Motor neuron (in vitro differentiated cells): ENCODE measurements at regions of chr22 and their contacts with region 1.

Region 1: DNA sequence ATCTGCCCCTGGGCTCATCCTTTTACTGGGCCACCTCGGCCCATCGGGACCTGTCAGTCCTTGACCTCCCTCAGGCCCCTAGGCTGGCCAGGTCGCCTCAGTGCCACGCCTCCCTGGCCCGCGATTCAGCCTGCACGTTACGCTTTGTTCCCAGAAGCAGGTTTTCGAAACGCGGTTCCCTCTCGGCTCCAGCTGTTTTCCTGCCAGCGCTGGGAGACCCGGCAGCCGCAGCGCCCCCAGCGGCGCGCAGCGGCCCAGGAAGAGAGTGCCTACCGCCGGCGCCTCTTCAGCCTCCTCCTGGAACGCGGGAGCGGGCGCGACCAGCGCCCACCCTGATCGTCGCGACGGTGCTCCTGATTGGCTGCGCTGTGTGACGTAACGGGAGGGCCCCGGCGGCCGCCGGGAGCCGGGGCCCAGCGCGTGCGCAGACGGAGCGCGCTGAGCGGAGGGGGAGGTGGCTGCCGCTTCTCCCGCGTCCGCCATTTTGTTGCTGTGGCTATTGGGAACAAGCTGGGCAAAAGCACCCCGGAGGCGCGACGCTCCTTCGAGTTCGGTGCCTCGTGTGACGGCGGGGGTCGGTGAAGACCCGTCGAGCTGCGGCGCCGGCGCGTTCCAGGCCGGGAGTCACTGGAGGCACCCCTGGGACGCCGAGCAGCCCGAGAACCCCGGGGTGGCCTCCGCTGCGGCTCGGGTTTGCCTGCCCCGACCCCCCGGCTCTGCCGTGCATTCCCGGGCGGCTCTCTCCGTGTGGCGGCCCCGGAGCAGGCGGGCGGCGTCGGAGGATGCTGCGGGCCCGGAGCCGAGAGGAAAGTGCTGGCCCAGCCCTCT is at the start of gene CRKL:
- ATAC-seq: peak; percentile 92 to 99 (median 98)
- H3K4me3 ChIP-seq: peak within 1 kb of the TSS; percentile 68 to 94 (median 81)
- H3K27ac ChIP-seq: peak within 1 kb of the TSS; percentile 94 to 98
- H3K4me1 ChIP-seq: peaks cover 9 to 21% of the 10 kb centered on the region in 2 donors
- total RNA-seq, gene CRKL: 31.0 to 52.8 (median 39.3) TPM

Region 2: DNA sequence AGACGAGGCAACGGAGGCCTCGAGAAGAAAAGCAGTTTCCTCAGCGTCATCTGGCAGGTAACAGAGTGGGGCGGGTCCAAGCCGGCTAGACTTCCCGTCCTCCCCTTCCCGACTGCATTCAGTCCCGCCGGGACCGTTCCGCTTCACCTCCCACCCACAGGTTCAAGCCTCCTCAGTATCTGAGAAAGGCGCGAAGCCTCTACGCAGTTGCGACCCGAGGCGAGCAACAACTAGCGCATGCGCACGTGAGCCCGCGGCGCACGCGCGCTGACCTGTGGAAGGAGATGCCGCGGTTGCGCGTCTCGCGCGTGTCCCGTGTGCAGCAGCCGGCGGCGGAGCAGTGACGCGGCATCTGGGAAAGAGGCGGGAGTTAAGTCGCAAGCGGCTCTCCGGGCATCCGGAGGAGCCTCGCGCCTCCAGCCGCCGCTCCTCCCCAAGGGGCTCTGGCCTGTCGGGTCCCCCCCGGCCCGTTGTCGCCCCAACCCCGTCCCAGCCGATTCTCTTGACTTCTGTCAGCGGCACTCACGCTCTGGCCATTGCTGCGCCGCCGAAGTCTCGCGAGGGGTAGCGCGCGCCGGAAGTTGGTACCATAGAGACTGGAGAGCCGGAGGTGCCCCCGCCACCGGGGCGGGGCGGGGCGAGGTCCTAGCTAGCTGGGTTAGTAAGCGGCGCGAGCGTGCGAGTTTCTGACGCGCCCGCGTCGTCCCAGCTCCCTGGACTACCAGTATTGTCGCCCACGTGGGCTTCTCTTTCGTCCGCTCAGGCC is 84.5 kb after region 1 on chr22 and contains the start of gene THAP7:
- in situ Hi-C with region 1: loop called in 1 of 9 experiments (anchors 25 kb)
- ATAC-seq: peak; percentile 82 to 93 (median 90)
- H3K4me3 ChIP-seq: peak within 1 kb of the TSS; percentile 67 to 93 (median 84)
- H3K27ac ChIP-seq: peak within 1 kb of the TSS; percentile 98 to 100
- H3K4me1 ChIP-seq: peaks cover 17 to 23% of the 10 kb centered on the region in 2 donors
- total RNA-seq, gene THAP7: 21.4 to 33.0 (median 29.4) TPM